B cell (primary cell): ENCODE measurements at regions of chr17 and their contacts with region 1.

Region 1: GRCh38 chr17:63621766-63622519 is at the start of gene MAP3K3:
- DNase-seq: peak; percentile 98
- ATAC-seq: peak; percentile 86
- H3K4me3 ChIP-seq: peak within 1 kb of the TSS; percentile 67 to 90 (median 71)
- H3K4me3 Mint-ChIP-seq: peak within 1 kb of the TSS; percentile 99
- H3K27ac ChIP-seq: peak within 1 kb of the TSS; percentile 47 to 79
- H3K27ac Mint-ChIP-seq: peak within 1 kb of the TSS; percentile 97
- H3K4me1 ChIP-seq: peaks cover 18 to 24% of the 10 kb centered on the region in 2 donors
- H3K4me1 Mint-ChIP-seq: peaks cover 39% of the 10 kb centered on the region
- H3K27me3 ChIP-seq: no peaks in the 10 kb centered on the region
- H3K27me3 Mint-ChIP-seq: no peaks in the 10 kb centered on the region
- CTCF ChIP-seq: no peak
- total RNA-seq, gene MAP3K3: 74.7 and 80.0 TPM in 2 replicates

Region 2: GRCh38 chr17:63445979-63446691 is 175.8 kb before region 1 on chr17 and contains the start of gene CYB561:
- CTCF ChIA-PET with region 1: interaction called, 3 read pairs
- POLR2A ChIA-PET with region 1: interaction called, 4 read pairs
- intact Hi-C with region 1: loop called (anchors 2 kb)
- DNase-seq: peak; percentile 94
- ATAC-seq: peak; percentile 73
- H3K4me3 ChIP-seq: peak within 1 kb of the TSS in 4 of 5 experiments; percentile 54 to 70 (median 61)
- H3K4me3 Mint-ChIP-seq: peak within 1 kb of the TSS; percentile 77
- H3K27ac ChIP-seq: peak within 1 kb of the TSS; percentile 38 to 79
- H3K27ac Mint-ChIP-seq: peak within 1 kb of the TSS; percentile 81
- H3K4me1 ChIP-seq: peaks cover 13 to 24% of the 10 kb centered on the region in 2 donors
- H3K4me1 Mint-ChIP-seq: peaks cover 15% of the 10 kb centered on the region
- H3K27me3 ChIP-seq: peaks cover 0 to 2% (median 0%) of the 10 kb centered on the region in 4 experiments
- H3K27me3 Mint-ChIP-seq: peaks cover 6% of the 10 kb centered on the region
- CTCF ChIP-seq: peak; percentile 59
- total RNA-seq, gene CYB561: 3.6 and 4.9 TPM in 2 replicates

Region 3: DNA sequence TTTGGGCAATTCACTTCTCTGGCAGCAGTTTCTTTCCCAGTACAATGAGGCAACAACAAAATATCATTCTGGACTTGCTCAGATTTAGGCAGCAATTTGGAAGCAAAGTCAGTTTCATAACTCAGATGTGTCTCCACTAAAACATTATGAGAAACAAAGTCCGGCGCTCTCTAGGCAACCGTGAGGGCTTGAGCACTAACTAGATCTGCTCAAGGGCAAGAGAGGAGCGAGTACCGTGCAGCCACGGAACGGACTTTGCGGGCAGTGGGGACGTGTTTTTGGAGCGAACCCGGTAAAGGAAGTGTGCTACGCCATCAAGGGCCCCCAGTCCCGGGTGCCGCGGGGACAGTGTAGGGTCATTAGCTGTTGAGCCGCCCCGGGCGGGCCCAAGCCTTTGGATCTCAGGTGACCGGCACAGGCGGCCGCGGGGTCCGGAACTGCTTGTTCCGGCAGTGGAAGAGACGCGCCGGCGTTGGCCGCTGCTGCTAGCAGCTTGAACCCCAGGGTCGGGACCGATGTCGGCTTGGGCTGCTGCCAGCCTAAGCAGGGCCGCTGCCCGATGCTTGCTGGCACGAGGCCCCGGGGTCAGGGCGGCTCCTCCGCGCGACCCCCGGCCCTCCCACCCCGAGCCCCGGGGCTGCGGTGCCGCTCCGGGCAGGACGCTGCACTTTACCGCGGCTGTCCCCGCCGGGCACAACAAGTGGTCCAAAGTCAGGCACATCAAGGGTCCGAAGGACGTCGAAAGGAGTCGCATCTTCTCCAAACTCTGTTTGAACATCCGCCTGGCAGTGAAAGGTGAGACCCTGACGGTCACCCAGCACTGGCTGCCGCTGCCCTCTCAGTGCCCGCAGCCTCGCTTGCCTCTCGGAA is 21.1 kb before region 1 on chr17 and contains the start of gene TACO1:
- CTCF ChIA-PET with region 1: interaction called, 5 read pairs
- POLR2A ChIA-PET with region 1: interaction called, 8 read pairs
- intact Hi-C with region 1: loop called (anchors 1 kb)
- DNase-seq: peak; percentile 87
- ATAC-seq: peak; percentile 97
- H3K4me3 ChIP-seq: peak within 1 kb of the TSS; percentile 67 to 97 (median 91)
- H3K4me3 Mint-ChIP-seq: peak within 1 kb of the TSS; percentile 95
- H3K27ac ChIP-seq: peak within 1 kb of the TSS; percentile 39 to 88
- H3K27ac Mint-ChIP-seq: peak within 1 kb of the TSS; percentile 93
- H3K4me1 ChIP-seq: peaks cover 15 to 19% of the 10 kb centered on the region in 2 donors
- H3K4me1 Mint-ChIP-seq: peaks cover 21% of the 10 kb centered on the region
- H3K27me3 ChIP-seq: no peaks in the 10 kb centered on the region
- H3K27me3 Mint-ChIP-seq: no peaks in the 10 kb centered on the region
- CTCF ChIP-seq: no peak
- total RNA-seq, gene TACO1: 15.9 and 17.2 TPM in 2 replicates

Region 4: DNA sequence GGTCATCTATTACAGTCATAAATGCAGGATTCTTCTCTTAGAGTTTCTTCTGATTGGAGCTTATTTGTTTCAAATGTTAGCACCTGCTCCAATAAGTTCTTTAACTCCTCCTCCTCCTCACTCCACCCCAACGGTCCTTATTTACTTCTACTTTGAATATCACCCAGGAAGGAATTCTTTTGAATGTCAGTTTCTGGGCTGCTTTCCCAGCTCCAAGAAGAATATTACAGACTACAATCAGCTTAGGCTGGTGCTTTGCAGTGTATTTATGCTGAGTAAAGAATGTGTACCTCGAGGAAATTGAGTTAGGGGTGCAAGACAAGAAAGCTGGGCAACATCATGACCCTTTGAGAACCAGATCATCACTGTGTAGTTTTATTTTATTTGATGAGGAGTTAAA is 31.1 kb after region 1 on chr17:
- CTCF ChIA-PET with region 1: no interaction called
- POLR2A ChIA-PET with region 1: no interaction called
- intact Hi-C with region 1: no loop called
- DNase-seq: no peak
- ATAC-seq: no peak
- H3K4me3 ChIP-seq: no peak overlapping the region
- H3K4me3 Mint-ChIP-seq: no peak overlapping the region
- H3K27ac ChIP-seq: no peak overlapping the region
- H3K27ac Mint-ChIP-seq: peak overlapping the region; percentile 10
- H3K4me1 ChIP-seq: no peaks in the 10 kb centered on the region
- H3K4me1 Mint-ChIP-seq: peaks cover 3% of the 10 kb centered on the region
- H3K27me3 ChIP-seq: no peaks in the 10 kb centered on the region
- H3K27me3 Mint-ChIP-seq: no peaks in the 10 kb centered on the region
- CTCF ChIP-seq: no peak

Region 5: DNA sequence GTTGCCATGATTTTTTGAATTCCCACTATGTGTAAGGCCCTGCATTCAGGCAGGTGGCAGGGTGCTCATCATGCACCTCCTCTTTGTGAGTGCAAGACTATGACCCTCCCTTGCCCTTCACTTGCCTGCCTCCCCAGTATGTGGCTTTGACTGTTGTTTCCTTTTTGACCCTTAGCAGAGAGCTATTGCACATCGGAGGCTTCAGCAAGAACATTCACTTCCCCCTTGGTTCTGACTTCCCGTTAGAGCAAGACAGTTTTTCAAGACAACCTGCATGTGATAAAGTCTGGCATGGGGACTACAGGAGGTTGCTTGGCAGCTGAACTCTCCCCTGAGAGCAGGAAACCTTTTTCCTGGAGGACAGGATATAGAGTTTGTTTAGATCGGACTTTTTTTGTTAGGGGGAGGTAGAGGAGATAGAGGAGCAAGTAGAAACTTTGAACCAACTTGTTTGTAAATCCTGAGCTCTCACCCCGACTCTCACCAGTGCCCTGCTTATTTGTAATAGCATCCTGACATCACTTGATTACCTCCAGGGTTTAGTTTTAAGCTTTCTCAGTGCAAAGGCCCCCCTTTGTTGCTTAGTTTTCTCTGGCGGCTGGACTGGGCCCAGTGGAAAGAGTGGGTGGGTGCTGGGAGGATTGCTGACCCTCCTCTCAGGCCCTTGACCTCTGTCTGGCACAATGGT is 43.7 kb after region 1 on chr17:
- CTCF ChIA-PET with region 1: no interaction called
- POLR2A ChIA-PET with region 1: interaction called, 3 read pairs
- intact Hi-C with region 1: loop called (anchors 5 kb)
- DNase-seq: peak; percentile 66
- ATAC-seq: peak; percentile 84
- H3K4me3 ChIP-seq: no peak overlapping the region
- H3K4me3 Mint-ChIP-seq: peak overlapping the region; percentile 77
- H3K27ac ChIP-seq: peak overlapping the region; percentile 71 to 76
- H3K27ac Mint-ChIP-seq: peak overlapping the region; percentile 96
- H3K4me1 ChIP-seq: peaks cover 28 to 40% of the 10 kb centered on the region in 2 donors
- H3K4me1 Mint-ChIP-seq: peaks cover 37% of the 10 kb centered on the region
- H3K27me3 ChIP-seq: no peaks in the 10 kb centered on the region
- H3K27me3 Mint-ChIP-seq: no peaks in the 10 kb centered on the region
- CTCF ChIP-seq: no peak

Region 6: GRCh38 chr17:63741221-63742049 is 119.5 kb after region 1 on chr17 and contains the start of gene STRADA:
- CTCF ChIA-PET with region 1: no interaction called
- POLR2A ChIA-PET with region 1: interaction called, 6 read pairs
- intact Hi-C with region 1: loop called (anchors 1 kb)
- DNase-seq: peak; percentile 99
- ATAC-seq: peak; percentile 89
- H3K4me3 ChIP-seq: peak within 1 kb of the TSS; percentile 85 to 99 (median 93)
- H3K4me3 Mint-ChIP-seq: peak within 1 kb of the TSS; percentile 89
- H3K27ac ChIP-seq: peak within 1 kb of the TSS; percentile 97
- H3K27ac Mint-ChIP-seq: peak within 1 kb of the TSS; percentile 93
- H3K4me1 ChIP-seq: peaks cover 15 to 28% of the 10 kb centered on the region in 2 donors
- H3K4me1 Mint-ChIP-seq: peaks cover 28% of the 10 kb centered on the region
- H3K27me3 ChIP-seq: no peaks in the 10 kb centered on the region
- H3K27me3 Mint-ChIP-seq: no peaks in the 10 kb centered on the region
- CTCF ChIP-seq: no peak
- total RNA-seq, gene STRADA: 87.4 and 93.2 TPM in 2 replicates

Region 7: GRCh38 chr17:63827002-63827771 is 205.2 kb after region 1 on chr17 and contains the starts of genes FTSJ3 and PSMC5:
- CTCF ChIA-PET with region 1: no interaction called
- POLR2A ChIA-PET with region 1: no interaction called
- intact Hi-C with region 1: loop called (anchors 2 kb)
- DNase-seq: peak; percentile 98
- ATAC-seq: peak; percentile 95
- H3K4me3 ChIP-seq: peak within 1 kb of the TSS; percentile 78 to 92 (median 81)
- H3K4me3 Mint-ChIP-seq: peak within 1 kb of the TSS; percentile 98
- H3K27ac ChIP-seq: peak within 1 kb of the TSS; percentile 70 to 92
- H3K27ac Mint-ChIP-seq: peak within 1 kb of the TSS; percentile 98
- H3K4me1 ChIP-seq: peaks cover 38 to 53% of the 10 kb centered on the region in 2 donors
- H3K4me1 Mint-ChIP-seq: peaks cover 73% of the 10 kb centered on the region
- H3K27me3 ChIP-seq: no peaks in the 10 kb centered on the region
- H3K27me3 Mint-ChIP-seq: no peaks in the 10 kb centered on the region
- CTCF ChIP-seq: peak; percentile 72
- total RNA-seq, gene FTSJ3: 75.9 and 78.2 TPM in 2 replicates
- total RNA-seq, gene PSMC5: 84.7 and 87.1 TPM in 2 replicates